Endothelial cell of umbilical vein (primary cell): ENCODE measurements at regions of chr6 and their contacts with region 1.

Region 1: DNA sequence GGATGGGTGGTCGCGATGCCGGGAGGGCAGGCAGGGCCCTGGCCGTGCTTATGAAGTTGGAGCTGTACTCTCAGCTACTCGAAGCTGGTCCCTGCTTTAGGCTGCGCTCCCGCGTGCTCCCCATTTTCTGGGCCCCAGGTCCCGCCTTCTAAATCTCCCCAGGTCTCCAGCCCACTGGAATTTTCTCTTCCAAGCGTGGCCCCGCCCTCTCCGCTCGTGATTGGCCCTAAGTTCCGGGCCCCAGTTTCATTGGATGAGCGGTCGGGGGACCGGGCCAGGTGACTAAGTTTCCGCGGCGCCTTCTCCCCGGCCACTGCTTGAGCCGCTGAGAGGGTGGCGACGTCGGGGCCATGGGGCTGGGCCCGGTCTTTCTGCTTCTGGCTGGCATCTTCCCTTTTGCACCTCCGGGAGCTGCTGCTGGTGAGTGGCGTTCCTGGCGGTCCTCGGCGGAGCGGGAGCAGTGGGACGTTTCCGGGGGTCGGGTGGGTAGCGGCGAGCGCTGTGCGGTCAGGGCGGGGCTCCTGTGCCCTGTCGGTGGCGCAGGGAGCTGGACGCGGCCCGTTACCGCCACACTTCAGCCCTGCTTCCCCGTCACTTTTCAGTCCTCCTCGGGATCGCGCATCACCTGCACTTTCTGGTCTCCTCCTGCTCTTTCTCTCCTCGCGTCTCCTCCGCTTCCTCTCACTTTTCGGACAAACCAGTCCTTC is at the start of gene MICA:
- DNase-seq: peak; percentile 90
- H3K4me3 ChIP-seq: peak within 1 kb of the TSS; percentile 22 to 57 (median 26)
- H3K27ac ChIP-seq: peak within 1 kb of the TSS; percentile 92
- H3K4me1 ChIP-seq: peaks cover 28% of the 10 kb centered on the region
- H3K27me3 ChIP-seq: no peaks in the 10 kb centered on the region
- CTCF ChIP-seq: no peak
- POLR2A ChIP-seq: peak; percentile 91
- total RNA-seq, gene MICA: 42.5 and 45.2 TPM in 2 replicates

Region 2: GRCh38 chr6:31197559-31198305 is 205.7 kb before region 1 on chr6:
- CTCF ChIA-PET with region 1: no interaction called
- POLR2A ChIA-PET with region 1: no interaction called
- dilution Hi-C with region 1: no loop called
- intact Hi-C with region 1: no loop called
- DNase-seq: peak; percentile 74
- H3K4me3 ChIP-seq: peak overlapping the region; percentile 51 to 88 (median 79)
- H3K27ac ChIP-seq: peak overlapping the region; percentile 93
- H3K4me1 ChIP-seq: peaks cover 4% of the 10 kb centered on the region
- H3K27me3 ChIP-seq: no peaks in the 10 kb centered on the region
- CTCF ChIP-seq: no peak
- POLR2A ChIP-seq: peak; percentile 27

Region 3: GRCh38 chr6:31317036-31317435 is 86.4 kb before region 1 on chr6:
- CTCF ChIA-PET with region 1: no interaction called
- POLR2A ChIA-PET with region 1: no interaction called
- dilution Hi-C with region 1: no loop called
- intact Hi-C with region 1: no loop called
- DNase-seq: no peak
- H3K4me3 ChIP-seq: no peak overlapping the region
- H3K27ac ChIP-seq: no peak overlapping the region
- H3K4me1 ChIP-seq: no peaks in the 10 kb centered on the region
- H3K27me3 ChIP-seq: peaks cover 26 to 44% of the 10 kb centered on the region in 2 experiments
- CTCF ChIP-seq: no peak
- POLR2A ChIP-seq: no peak

Region 4: DNA sequence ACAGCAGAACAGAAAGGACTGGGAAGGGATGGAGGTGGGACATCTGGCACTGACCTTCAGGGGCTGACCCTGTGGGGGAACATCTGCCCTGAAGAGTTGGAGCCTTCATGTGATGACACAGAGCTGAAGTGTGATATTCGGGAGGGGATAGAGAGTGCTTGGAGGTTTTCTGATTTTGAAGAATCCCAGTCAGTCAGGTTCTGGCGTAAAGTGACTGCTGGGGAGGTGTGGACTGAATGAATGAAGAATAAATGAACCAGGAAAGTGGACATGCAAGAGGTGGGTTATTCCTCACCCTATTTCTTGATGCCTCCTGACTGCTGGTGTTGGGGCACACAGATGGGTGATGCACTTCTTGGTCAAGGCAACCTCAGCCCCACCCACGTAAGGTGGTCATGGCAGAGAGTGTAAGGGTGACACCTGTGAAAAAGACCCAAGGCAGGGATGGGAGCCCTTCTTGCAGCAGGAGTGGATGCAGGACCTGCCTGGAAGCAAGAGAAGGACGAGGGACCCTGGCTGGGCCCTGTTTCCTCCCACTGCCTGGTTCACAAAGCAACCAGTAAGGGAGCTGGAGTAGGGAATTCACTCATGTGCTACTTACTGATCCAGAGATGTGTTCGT is 13.1 kb after region 1 on chr6:
- CTCF ChIA-PET with region 1: interaction called, 6 read pairs
- POLR2A ChIA-PET with region 1: no interaction called
- dilution Hi-C with region 1: no loop called
- intact Hi-C with region 1: loop called (anchors 2 kb)
- DNase-seq: no peak
- H3K4me3 ChIP-seq: no peak overlapping the region
- H3K27ac ChIP-seq: no peak overlapping the region
- H3K4me1 ChIP-seq: peaks cover 5% of the 10 kb centered on the region
- H3K27me3 ChIP-seq: peaks cover 0 to 4% of the 10 kb centered on the region in 2 experiments
- CTCF ChIP-seq: no peak
- POLR2A ChIP-seq: no peak

Region 5: GRCh38 chr6:31525932-31526591 is 122.6 kb after region 1 on chr6:
- CTCF ChIA-PET with region 1: no interaction called
- POLR2A ChIA-PET with region 1: no interaction called
- dilution Hi-C with region 1: no loop called
- intact Hi-C with region 1: no loop called
- DNase-seq: peak; percentile 80
- H3K4me3 ChIP-seq: no peak overlapping the region
- H3K27ac ChIP-seq: peak overlapping the region; percentile 98
- H3K4me1 ChIP-seq: peaks cover 24% of the 10 kb centered on the region
- H3K27me3 ChIP-seq: no peaks in the 10 kb centered on the region
- CTCF ChIP-seq: no peak
- POLR2A ChIP-seq: no peak